ENCODE measurements at regions of chr14 and their contacts with region 1.

Region 1: DNA sequence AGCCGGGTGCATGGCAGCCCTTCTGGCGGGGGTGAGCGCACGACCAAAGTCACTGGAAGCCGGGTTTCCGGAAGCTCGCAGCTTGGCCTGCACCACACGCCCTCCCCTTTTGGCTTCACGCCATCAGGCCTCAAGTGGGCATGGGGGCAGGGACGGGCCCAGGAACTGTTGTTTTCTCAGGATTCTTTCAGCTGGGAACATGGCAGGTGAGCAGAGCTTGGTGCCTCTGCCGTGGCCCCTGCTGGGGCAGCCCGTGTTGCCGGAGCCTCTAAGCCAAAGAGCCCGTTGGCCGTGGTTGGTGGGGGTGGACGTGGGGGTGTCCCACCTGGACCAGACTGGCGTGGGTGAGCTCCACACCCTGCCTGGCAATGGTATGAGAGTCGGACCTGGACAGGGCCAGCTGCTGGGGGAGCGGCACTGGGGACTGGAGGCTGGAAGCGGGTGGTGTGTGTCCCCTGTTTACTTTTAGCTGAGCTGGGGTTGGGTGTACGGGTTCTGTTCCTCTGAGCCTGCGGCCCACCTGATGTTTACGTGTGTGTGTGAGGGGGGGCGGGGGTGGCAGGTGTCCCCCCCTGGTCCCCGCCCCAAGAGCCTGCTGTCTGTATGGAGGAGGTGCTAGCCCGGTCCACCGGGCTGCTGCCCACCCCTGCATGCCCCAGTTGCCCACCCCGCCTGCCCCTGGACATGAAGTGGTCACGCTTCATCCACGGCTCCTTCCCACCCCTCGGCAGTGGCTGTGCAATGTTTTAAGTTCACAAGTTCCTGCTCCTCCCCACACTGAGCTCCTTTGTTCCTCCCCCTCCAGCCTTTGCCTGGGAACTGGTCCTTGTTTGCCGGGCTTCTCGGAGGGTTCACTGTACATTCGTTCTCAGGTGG is 28.7 kb upstream of the PLD4 start:
- DNase-seq: peak in 1 of 2 donors; percentile 69
- H3K4me3 ChIP-seq: no peak overlapping the region
- H3K27ac ChIP-seq: peak overlapping the region in 1 of 2 donors; percentile 4
- H3K4me1 ChIP-seq: peaks cover 0 to 21% (median 10%) of the 10 kb centered on the region in 4 donors
- H3K27me3 ChIP-seq: no peaks in the 10 kb centered on the region
- CTCF ChIP-seq: no peak

Region 2: GRCh38 chr14:104924421-104925213 is 28.6 kb after region 1 on chr14 and contains the start of gene PLD4:
- intact Hi-C with region 1: no loop called
- DNase-seq: no peak
- H3K4me3 ChIP-seq: no peak within 1 kb of the TSS
- H3K27ac ChIP-seq: no peak within 1 kb of the TSS
- H3K4me1 ChIP-seq: no peaks in the 10 kb centered on the region
- H3K27me3 ChIP-seq: peaks cover 0 to 21% of the 10 kb centered on the region in 2 donors
- CTCF ChIP-seq: no peak

Region 3: GRCh38 chr14:105028251-105028784 is 132.3 kb after region 1 on chr14:
- intact Hi-C with region 1: no loop called
- DNase-seq: no peak
- H3K4me3 ChIP-seq: no peak overlapping the region
- H3K27ac ChIP-seq: no peak overlapping the region
- H3K4me1 ChIP-seq: peaks cover 0 to 9% (median 0%) of the 10 kb centered on the region in 4 donors
- H3K27me3 ChIP-seq: no peaks in the 10 kb centered on the region
- CTCF ChIP-seq: no peak

Region 4: DNA sequence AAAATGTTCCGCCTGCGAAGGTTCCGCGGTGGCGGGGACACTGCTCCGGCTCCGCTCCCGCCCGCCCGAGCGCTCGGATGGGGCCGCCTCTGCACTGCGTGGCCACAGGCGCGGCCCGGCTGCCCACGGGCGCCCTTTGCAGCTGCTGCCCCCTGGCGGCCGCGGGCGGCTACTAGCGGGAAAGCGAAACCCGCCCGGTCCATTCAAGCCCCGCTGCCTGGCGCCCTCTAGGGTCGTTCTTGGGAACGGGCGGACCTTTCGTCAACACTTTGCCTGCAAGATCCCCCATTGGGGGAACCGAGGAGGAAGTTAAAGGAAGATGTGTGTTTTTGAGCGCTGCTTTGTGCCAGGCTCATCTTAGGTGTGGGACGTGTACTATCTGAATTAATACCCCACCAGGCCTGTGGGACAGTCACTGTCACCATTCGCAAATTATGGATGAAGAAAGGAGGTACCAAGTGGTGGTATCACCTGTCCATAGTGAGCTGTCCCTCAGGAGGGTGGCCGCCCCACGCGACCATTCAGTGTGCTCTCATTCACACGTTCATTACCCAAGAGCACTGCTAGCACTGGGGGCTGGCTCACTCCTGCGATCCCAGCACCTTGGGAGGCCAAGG is 149.8 kb after region 1 on chr14:
- intact Hi-C with region 1: loop called (anchors 2 kb)
- DNase-seq: peak; percentile 86 to 91
- H3K4me3 ChIP-seq: no peak overlapping the region
- H3K27ac ChIP-seq: no peak overlapping the region
- H3K4me1 ChIP-seq: no peaks in the 10 kb centered on the region
- H3K27me3 ChIP-seq: peaks cover 0 to 44% of the 10 kb centered on the region in 2 donors
- CTCF ChIP-seq: peak; percentile 100

Measured in tibial artery (tissue), 4 donors.